Caco-2 (cell line): ENCODE measurements at regions of chr12 and their contacts with region 1.

Region 1: GRCh38 chr12:33427072-33427471 is 12.5 kb downstream of the SYT10 start:
- DNase-seq: peak in 1 of 2 experiments; percentile 40
- H3K4me3 ChIP-seq: no peak overlapping the region
- H3K4me3 Mint-ChIP-seq: no peak overlapping the region
- H3K27ac Mint-ChIP-seq: no peak overlapping the region
- H3K4me1 ChIP-seq: no peaks in the 10 kb centered on the region
- H3K4me1 Mint-ChIP-seq: no peaks in the 10 kb centered on the region
- H3K27me3 ChIP-seq: no peaks in the 10 kb centered on the region
- H3K27me3 Mint-ChIP-seq: peaks cover 6% of the 10 kb centered on the region
- CTCF ChIP-seq: peak; percentile 24 to 25

Region 2: DNA sequence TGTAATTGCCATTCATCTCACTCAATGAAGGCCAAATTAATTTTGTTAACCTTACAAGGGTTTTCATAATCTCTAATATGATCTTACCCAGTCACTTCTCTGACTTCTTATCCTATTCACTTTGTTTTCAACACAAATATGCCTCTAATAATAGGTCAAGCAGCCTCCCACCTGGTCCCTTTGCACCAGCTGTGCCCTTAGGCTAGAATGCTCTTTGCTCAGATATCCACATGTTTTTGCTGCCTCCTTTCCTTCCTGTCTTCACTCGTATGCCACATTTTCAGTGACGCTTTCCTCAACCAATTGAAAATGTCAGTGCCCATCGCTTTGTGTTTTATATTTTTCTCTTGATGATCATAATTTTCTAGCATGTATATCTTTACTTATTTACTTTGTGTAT is 118.9 kb after region 1 on chr12:
- CTCF ChIA-PET with region 1: no interaction called
- POLR2A ChIA-PET with region 1: no interaction called
- intact Hi-C with region 1: no loop called
- DNase-seq: no peak
- H3K4me3 ChIP-seq: no peak overlapping the region
- H3K4me3 Mint-ChIP-seq: no peak overlapping the region
- H3K27ac Mint-ChIP-seq: no peak overlapping the region
- H3K4me1 ChIP-seq: no peaks in the 10 kb centered on the region
- H3K4me1 Mint-ChIP-seq: no peaks in the 10 kb centered on the region
- H3K27me3 ChIP-seq: no peaks in the 10 kb centered on the region
- H3K27me3 Mint-ChIP-seq: no peaks in the 10 kb centered on the region
- CTCF ChIP-seq: no peak

Region 3: DNA sequence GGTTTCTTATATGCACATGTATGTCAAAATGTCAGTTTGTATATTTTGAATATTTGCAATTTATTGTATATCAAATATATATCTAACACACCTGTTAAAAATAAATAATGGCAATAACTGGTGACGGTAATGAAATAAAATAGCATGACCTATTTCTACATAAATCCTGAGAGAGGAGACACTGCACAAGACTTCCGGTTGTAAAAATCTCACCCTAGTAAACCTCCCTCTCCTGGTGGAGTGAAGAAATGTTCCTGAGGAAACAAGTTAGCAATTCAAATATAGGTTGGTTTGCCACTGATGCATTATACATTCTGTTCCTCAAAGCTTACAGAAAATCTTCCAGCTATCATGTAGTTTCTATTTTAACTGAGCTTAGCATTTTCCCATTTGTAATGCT is 178.7 kb after region 1 on chr12:
- CTCF ChIA-PET with region 1: no interaction called
- POLR2A ChIA-PET with region 1: no interaction called
- intact Hi-C with region 1: loop called (anchors 5 kb)
- DNase-seq: peak in 1 of 2 experiments; percentile 43
- H3K4me3 ChIP-seq: no peak overlapping the region
- H3K4me3 Mint-ChIP-seq: no peak overlapping the region
- H3K27ac Mint-ChIP-seq: no peak overlapping the region
- H3K4me1 ChIP-seq: no peaks in the 10 kb centered on the region
- H3K4me1 Mint-ChIP-seq: no peaks in the 10 kb centered on the region
- H3K27me3 ChIP-seq: no peaks in the 10 kb centered on the region
- H3K27me3 Mint-ChIP-seq: peaks cover 11% of the 10 kb centered on the region
- CTCF ChIP-seq: peak; percentile 56 to 62

Region 4: DNA sequence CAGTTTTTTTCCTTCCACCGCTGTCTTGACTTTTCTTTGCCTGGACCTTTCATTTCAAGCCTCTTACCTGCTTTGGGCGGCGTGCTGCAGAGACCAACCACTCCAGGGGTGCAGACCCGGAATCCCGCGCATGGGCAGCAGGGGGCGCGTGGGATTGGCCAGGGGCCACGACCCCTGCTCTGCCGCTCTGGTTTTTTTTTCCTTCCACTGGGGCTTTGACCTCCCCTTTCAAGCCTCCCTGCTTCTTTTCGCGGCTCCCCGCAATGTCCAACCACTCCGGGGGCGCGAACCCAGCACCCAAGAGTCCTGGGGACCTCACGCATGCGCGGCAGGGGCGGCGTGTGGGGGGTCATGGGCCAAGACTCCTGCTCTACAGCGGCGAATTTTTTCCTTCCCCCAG is 920.3 kb after region 1 on chr12:
- CTCF ChIA-PET with region 1: no interaction called
- POLR2A ChIA-PET with region 1: no interaction called
- intact Hi-C with region 1: no loop called
- DNase-seq: peak; percentile 84 to 87
- H3K4me3 ChIP-seq: no peak overlapping the region
- H3K4me3 Mint-ChIP-seq: peak overlapping the region; percentile 89
- H3K27ac Mint-ChIP-seq: peak overlapping the region; percentile 65
- H3K4me1 ChIP-seq: peaks cover 4% of the 10 kb centered on the region; the same call in 1 of the 2 replicates
- H3K4me1 Mint-ChIP-seq: peaks cover 12% of the 10 kb centered on the region
- H3K27me3 ChIP-seq: no peaks in the 10 kb centered on the region
- H3K27me3 Mint-ChIP-seq: peaks cover 30% of the 10 kb centered on the region
- CTCF ChIP-seq: peak; percentile 57 to 72